ENCODE measurements at regions of chr1 and their contacts with region 1.

Region 1: DNA sequence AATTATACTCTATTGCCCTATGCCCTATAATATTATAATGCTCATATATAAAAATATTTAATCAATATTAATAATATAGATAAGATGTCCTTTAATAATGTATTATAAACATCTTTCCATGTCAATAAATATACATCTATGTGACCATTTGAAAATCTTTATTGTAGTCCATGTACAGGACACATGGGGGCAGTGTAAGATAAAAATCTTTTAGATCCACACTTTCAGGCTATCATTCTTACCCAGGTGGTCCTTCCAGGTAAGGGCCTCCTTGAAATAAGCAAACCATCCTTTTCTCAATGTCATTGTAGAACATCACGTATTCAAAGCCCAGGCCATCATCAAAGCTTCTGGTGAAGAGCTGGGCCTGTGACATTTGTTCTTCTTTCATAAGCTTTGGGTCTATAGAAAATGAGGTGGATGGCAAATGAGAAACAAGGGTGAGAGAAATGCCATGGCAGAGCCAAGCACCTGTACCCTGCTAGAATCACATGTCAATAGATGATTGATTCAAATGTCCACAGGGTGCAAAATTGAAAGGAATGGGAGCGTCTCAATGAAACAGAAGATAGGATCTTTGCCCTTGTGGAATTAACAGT is 20.2 kb downstream of the THEM4 start:
- DNase-seq: no peak

Region 2: DNA sequence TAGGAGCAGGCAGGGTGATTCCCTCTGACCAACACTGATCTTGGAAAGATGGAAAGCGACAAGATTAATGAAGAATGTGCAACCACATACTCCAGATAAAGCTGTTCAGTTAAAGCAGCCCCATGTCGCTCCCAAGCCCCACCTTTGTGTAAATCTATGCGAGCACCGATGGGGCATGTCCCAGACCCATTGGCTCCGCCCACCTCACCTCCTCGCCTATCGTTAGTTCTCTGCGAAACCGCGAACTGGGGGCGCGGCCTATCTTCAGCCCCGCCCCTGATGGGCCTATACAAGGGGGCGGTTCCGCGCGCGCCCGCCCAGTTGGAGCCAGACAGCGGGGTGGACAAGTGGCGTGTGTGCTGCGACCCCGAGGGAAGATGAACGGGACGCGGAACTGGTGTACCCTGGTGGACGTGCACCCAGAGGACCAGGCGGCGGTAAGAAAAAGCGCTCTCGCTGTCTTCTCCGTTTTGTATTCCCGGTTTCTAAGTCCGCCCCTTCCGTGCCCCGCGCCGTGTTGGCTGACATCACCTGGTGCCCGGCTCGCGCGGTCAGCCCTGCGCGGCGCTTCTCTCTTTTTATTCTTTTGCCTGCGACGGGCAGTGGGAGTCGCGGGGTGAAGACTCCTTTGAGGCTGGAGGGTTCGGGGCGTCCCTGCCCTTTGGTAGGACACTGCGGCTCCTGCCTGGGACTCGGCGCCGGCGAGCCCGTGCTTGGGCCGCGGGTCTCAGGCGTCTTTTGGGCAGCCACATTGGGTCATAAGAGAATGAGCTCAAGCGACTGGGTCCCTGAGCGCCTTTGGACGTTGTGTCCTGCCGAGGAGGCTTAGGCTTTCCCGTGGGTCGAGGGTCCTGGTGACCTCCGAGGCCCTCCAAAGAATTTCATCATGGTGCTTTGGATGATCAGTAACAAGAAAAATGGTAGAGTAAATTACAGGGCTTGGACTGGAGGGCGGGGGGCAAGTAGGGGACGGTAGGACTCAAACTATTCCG is 348.8 kb before region 1 on chr1 and contains the start of gene TUFT1:
- intact Hi-C with region 1: no loop called
- DNase-seq: peak; percentile 79 to 99 (median 91)

Region 3: DNA sequence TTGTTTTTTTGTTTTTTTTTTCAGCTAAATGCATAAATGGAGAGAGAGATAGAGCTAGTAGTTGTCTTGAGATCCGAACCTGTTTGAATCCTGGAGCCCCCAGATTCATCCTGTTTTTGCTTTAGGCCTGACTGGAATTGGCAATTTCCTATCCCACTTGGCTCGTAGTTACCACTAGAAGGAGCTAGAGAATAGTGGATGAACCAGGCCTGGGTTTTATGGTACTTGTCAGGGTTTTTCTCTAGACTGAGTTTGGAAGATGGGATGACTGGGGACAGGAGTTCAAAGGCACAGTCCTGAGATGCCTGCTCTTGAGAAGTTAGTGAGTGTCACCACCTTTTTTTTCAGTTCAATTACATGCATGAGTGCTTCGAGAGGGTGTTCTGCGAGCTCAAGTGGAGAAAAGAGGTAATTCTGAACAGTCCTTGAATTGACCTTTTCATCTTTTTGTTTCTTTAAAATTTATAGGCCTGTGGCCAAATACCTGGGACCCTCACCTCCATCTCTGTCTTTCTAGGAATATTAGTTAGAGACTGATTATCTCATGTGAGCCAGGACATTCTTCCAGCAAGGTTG is 195.9 kb before region 1 on chr1:
- intact Hi-C with region 1: loop called (anchors 10 kb)
- DNase-seq: no peak

Region 4: GRCh38 chr1:151756291-151756690 is 132.8 kb before region 1 on chr1:
- intact Hi-C with region 1: no loop called
- DNase-seq: no peak

Region 5: DNA sequence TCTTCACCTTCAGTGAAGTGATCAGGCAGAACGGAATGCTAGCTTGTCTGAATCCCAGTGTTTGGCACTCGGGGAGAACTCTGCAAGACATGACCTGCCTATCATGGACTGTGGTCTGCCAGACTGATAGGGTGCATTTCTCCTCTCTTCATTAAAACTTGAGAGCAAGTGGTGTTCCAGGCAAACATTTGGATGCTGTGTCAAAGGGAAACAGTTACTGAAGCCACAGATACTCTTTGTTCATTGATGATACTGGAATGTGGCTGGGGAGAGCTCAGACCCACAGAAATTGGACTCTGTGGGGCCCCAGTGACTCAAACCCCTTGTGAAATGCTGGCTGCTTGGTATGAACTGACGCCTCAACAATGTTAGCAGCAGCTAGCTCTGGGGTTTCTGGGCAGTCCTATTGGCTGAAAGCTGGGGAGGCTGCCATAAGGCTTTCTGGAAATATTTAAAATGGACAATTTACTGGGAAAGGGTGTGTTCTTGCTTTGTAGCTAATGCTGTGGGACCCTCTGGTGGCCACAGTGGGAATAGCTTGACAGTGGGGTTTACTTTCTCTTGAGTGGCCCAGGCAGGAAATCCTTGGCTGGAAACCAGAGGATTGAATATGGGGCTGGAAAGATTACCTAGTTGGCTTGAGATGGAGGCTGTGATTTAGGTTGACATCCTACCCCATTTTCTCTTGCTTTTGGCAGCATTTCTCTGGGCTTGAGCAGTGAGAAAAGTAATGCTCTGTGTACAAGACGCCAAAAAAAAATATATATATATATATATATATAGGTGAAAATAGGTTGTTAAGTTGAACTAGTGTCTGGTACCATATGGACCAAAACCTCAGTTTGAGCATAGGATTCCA is 112.5 kb after region 1 on chr1:
- intact Hi-C with region 1: loop called (anchors 1 kb)
- DNase-seq: peak; percentile 48 to 96 (median 81)